Sigmoid colon (tissue), 7 donors: ENCODE measurements at regions of chr7 and their contacts with region 1.

Region 1: GRCh38 chr7:5450549-5451372 is 27.1 kb upstream of the TNRC18 start:
- DNase-seq: peak; percentile 81
- H3K4me3 ChIP-seq: no peak overlapping the region
- H3K27ac ChIP-seq: no peak overlapping the region
- H3K4me1 ChIP-seq: peaks cover 0 to 19% (median 13%) of the 10 kb centered on the region in 4 donors
- H3K27me3 ChIP-seq: no peaks in the 10 kb centered on the region
- CTCF ChIP-seq: peak; percentile 51 to 78 (median 72)
- EP300 ChIP-seq: no peak
- POLR2A ChIP-seq: no peak

Region 2: GRCh38 chr7:5177060-5177459 is 273.7 kb before region 1 on chr7:
- intact Hi-C with region 1: no loop called
- DNase-seq: peak; percentile 74
- H3K4me3 ChIP-seq: no peak overlapping the region
- H3K27ac ChIP-seq: no peak overlapping the region
- H3K4me1 ChIP-seq: peaks cover 0 to 6% (median 0%) of the 10 kb centered on the region in 4 donors
- H3K27me3 ChIP-seq: no peaks in the 10 kb centered on the region
- CTCF ChIP-seq: no peak
- EP300 ChIP-seq: no peak
- POLR2A ChIP-seq: no peak

Region 3: GRCh38 chr7:5243261-5243660 is 207.5 kb before region 1 on chr7:
- intact Hi-C with region 1: loop called (anchors 5 kb)
- DNase-seq: no peak
- H3K4me3 ChIP-seq: no peak overlapping the region
- H3K27ac ChIP-seq: no peak overlapping the region
- H3K4me1 ChIP-seq: peaks cover 0 to 13% (median 10%) of the 10 kb centered on the region in 4 donors
- H3K27me3 ChIP-seq: no peaks in the 10 kb centered on the region
- CTCF ChIP-seq: no peak
- EP300 ChIP-seq: no peak
- POLR2A ChIP-seq: no peak